ENCODE measurements at regions of chr7 and their contacts with region 1.

Region 1: DNA sequence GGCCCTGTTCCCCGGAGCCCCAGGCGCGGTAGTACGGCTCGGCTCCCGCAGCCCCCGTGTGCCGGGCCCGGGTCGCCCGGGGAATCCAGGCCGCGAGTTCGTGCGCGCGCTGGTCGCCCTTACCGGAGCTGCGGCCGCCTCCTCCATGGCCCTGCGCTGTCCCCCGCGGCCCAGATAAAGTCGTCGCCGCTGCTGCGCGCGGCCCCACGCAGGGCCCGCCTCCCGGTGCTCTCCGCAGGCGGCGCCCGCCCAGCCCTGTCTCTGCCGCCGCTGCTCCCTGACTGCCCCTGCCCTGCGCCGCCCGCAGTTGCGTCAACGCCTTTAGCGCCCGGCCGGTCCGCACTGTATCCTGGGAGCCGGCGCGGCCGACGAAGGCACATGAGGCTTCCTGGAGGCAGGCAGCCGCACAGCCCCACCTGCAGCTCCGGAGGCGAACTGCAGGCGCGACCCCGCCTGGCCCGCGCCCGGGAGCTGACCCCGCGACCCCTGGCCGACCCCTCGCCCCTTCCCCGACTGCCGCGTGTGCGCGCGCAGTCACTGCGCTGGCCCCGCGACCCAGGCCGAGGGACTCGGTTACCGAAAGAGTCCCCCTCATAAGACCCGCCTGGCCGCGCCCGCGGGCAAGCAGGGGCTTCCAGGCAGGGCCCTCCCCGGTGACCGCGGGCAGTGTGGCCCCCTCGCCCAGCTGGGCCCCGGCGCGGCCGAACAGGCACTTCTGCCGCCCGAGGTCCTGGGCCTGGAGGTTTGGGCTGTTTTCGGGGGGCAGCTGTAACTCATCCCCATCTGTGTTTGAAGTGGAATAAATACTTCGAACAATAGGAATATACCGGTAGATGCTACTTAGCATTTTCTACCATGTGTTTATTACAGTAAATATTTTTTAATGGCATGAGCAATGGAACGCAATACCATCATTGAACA is 127.1 kb upstream of the ZNF746 start:
- DNase-seq: peak; percentile 89
- H3K4me3 ChIP-seq: peak overlapping the region; percentile 76 to 90 (median 89)
- H3K27ac ChIP-seq: peak overlapping the region; percentile 72
- H3K4me1 ChIP-seq: peaks cover 10% of the 10 kb centered on the region
- H3K27me3 ChIP-seq: peaks cover under 1 to 10% of the 10 kb centered on the region in 2 experiments
- CTCF ChIP-seq: peak; percentile 79 to 89
- POLR2A ChIP-seq: peak; percentile 84

Region 2: GRCh38 chr7:149195180-149196150 is 429.2 kb before region 1 on chr7 and contains the start of gene ZNF282:
- CTCF ChIA-PET with region 1: interaction called, 5 read pairs
- POLR2A ChIA-PET with region 1: no interaction called
- dilution Hi-C with region 1: no loop called
- intact Hi-C with region 1: loop called (anchors 10 kb)
- DNase-seq: peak; percentile 91
- H3K4me3 ChIP-seq: peak within 1 kb of the TSS; percentile 70 to 83 (median 78)
- H3K27ac ChIP-seq: peak within 1 kb of the TSS; percentile 61
- H3K4me1 ChIP-seq: peaks cover 25% of the 10 kb centered on the region
- H3K27me3 ChIP-seq: peaks cover 0 to 2% of the 10 kb centered on the region in 2 experiments
- CTCF ChIP-seq: peak; percentile 75 to 79
- POLR2A ChIP-seq: peak; percentile 90
- total RNA-seq, gene ZNF282: 34.4 and 36.0 TPM in 2 replicates

Region 3: GRCh38 chr7:149284850-149285626 is 339.6 kb before region 1 on chr7:
- CTCF ChIA-PET with region 1: no interaction called
- POLR2A ChIA-PET with region 1: no interaction called
- dilution Hi-C with region 1: no loop called
- intact Hi-C with region 1: loop called (anchors 10 kb)
- DNase-seq: peak; percentile 95
- H3K4me3 ChIP-seq: peak overlapping the region; percentile 43 to 76 (median 73)
- H3K27ac ChIP-seq: no peak overlapping the region
- H3K4me1 ChIP-seq: peaks cover 9% of the 10 kb centered on the region
- H3K27me3 ChIP-seq: no peaks in the 10 kb centered on the region
- CTCF ChIP-seq: no peak
- POLR2A ChIP-seq: peak; percentile 80

Region 4: GRCh38 chr7:149422129-149422913 is 202.4 kb before region 1 on chr7:
- CTCF ChIA-PET with region 1: interaction called, 3 read pairs
- POLR2A ChIA-PET with region 1: no interaction called
- dilution Hi-C with region 1: no loop called
- intact Hi-C with region 1: loop called (anchors 1 kb)
- DNase-seq: peak; percentile 69
- H3K4me3 ChIP-seq: peak overlapping the region; percentile 26 to 42 (median 41)
- H3K27ac ChIP-seq: no peak overlapping the region
- H3K4me1 ChIP-seq: peaks cover 10% of the 10 kb centered on the region
- H3K27me3 ChIP-seq: no peaks in the 10 kb centered on the region
- CTCF ChIP-seq: peak; percentile 68 to 72
- POLR2A ChIP-seq: no peak

Region 5: DNA sequence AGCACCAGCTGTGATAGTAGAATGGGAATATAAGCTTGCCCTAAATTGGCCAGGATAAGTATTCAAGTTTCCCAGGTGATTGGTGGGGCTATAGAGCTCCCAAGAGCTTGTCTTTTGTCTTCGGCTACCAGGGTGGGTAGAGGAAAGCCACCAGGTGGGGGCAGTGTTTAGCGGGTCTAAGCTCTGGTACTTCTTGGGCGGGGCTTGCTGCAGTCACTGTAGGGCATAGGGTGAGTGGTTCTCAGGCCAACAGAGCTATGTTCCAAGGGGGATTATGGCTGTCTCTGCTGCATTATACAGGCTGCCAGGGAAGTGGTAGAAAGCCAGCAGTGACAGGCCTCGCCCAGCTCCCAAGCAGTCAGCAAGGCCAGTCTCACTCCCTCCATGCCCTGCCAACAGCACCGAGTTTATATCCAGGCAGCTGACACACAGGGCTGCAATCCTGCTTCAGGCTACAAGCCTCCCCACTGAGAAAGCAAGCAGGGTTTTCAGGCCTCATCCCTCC is 38.0 kb after region 1 on chr7:
- CTCF ChIA-PET with region 1: interaction called, 11 read pairs
- POLR2A ChIA-PET with region 1: no interaction called
- dilution Hi-C with region 1: no loop called
- intact Hi-C with region 1: no loop called
- DNase-seq: peak; percentile 66
- H3K4me3 ChIP-seq: no peak overlapping the region
- H3K27ac ChIP-seq: no peak overlapping the region
- H3K4me1 ChIP-seq: no peaks in the 10 kb centered on the region
- H3K27me3 ChIP-seq: peaks cover 0 to 16% of the 10 kb centered on the region in 2 experiments
- CTCF ChIP-seq: peak; percentile 55 to 66
- POLR2A ChIP-seq: no peak

Region 6: DNA sequence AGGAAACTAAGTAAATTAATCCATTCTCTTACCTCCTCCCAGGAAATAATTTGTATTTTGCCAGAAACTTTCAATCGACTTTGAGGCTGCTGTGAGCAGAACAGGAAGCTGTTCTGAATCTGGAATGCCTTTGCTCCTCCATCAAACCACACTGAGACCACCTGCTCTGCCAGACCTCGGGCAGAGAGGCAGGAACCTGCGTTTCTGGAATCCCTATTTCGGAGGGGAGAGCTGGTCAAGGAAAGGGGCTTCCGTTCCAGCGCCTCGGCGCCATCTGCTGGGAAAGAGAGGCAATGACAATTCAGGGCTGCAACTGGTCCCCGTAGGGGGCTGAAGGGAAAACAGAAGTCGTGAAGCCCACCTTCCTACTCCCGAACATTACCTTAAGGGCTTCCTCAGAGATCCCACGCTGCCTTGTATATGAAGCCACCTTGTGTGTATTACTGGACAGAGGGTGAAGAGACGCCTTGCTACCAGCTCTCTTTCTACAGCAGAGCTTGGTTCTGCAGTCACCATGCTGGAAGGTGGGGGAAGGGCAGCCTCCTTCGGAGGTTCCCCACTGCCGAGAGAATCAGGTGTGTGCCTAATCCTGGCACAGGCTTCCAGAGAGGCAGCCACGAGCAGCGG is 117.5 kb after region 1 on chr7:
- CTCF ChIA-PET with region 1: interaction called, 10 read pairs
- POLR2A ChIA-PET with region 1: no interaction called
- dilution Hi-C with region 1: no loop called
- intact Hi-C with region 1: no loop called
- DNase-seq: peak; percentile 71
- H3K4me3 ChIP-seq: peak overlapping the region in 2 of 3 experiments; percentile 6 to 10
- H3K27ac ChIP-seq: no peak overlapping the region
- H3K4me1 ChIP-seq: no peaks in the 10 kb centered on the region
- H3K27me3 ChIP-seq: peaks cover 0 to 7% of the 10 kb centered on the region in 2 experiments
- CTCF ChIP-seq: peak; percentile 85 to 86
- POLR2A ChIP-seq: no peak

Region 7: DNA sequence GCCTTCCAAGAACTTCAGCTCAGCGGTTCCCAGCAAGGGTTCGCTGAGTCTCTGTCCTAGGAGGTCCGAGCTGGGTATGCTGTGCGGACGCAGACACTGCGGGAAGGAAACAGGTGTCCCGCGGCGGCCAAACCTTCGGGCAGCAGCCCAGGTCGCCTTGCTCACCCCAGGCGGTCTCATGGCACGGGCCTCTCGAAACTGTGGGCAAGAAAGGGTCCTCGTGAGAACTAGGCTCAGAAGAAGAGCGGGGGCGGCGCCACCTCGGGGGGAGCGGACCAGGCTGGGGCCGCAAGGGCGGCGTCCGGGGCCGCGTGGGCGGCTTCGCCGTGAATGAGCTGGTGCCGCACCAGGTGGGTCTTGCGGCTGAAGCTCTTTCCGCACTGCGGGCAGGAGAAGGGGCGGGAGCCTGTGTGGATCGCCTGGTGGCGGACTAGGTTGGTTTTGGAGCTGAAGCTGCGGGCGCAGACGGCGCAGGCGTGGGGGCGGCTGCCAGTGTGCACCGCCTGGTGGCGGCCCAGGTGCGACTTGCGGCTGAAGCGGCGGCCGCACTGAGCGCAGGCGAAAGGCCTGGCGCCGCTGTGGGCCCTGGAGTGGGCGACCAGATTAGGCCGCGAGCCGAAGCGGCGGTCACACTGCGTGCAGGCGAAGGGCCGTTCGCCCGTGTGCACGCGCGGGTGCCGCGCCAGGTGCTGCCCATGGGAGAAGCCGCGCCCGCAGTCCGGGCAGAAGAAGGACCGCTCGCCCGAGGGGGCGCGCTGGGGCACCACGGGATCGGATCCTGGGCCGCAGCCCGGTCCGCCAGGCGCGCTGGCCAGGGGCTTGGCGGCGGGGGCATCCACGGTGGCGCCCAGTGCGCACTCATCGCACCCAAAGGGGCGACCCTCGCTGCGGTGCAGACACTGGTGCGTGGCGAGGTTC is 140.1 kb after region 1 on chr7:
- CTCF ChIA-PET with region 1: no interaction called
- POLR2A ChIA-PET with region 1: no interaction called
- dilution Hi-C with region 1: no loop called
- intact Hi-C with region 1: no loop called
- DNase-seq: no peak
- H3K4me3 ChIP-seq: no peak overlapping the region
- H3K27ac ChIP-seq: no peak overlapping the region
- H3K4me1 ChIP-seq: no peaks in the 10 kb centered on the region
- H3K27me3 ChIP-seq: peaks cover 0 to 1% of the 10 kb centered on the region in 2 experiments
- CTCF ChIP-seq: no peak
- POLR2A ChIP-seq: no peak

Measured in endothelial cell of umbilical vein (primary cell).